MCF 10A (cell line): ENCODE measurements at regions of chr4 and their contacts with region 1.

Region 1: GRCh38 chr4:71009890-71010588 is 16.6 kb downstream of the DCK start:
- DNase-seq: peak; percentile 46
- H3K4me3 Mint-ChIP-seq: no peak overlapping the region
- H3K27ac Mint-ChIP-seq: no peak overlapping the region
- H3K4me1 Mint-ChIP-seq: peaks cover 12% of the 10 kb centered on the region
- H3K27me3 Mint-ChIP-seq: no peaks in the 10 kb centered on the region
- CTCF ChIP-seq: peak; percentile 35

Region 2: GRCh38 chr4:70601422-70602039 is 408.5 kb before region 1 on chr4:
- CTCF ChIA-PET with region 1: interaction called, 4 read pairs
- POLR2A ChIA-PET with region 1: no interaction called
- intact Hi-C with region 1: loop called (anchors 1 kb)
- DNase-seq: peak; percentile 76
- H3K4me3 Mint-ChIP-seq: no peak overlapping the region
- H3K27ac Mint-ChIP-seq: no peak overlapping the region
- H3K4me1 Mint-ChIP-seq: no peaks in the 10 kb centered on the region
- H3K27me3 Mint-ChIP-seq: no peaks in the 10 kb centered on the region
- CTCF ChIP-seq: peak; percentile 72

Region 3: GRCh38 chr4:70901984-70902576 is 108.0 kb before region 1 on chr4 and contains the start of gene MOB1B:
- CTCF ChIA-PET with region 1: interaction called, 11 read pairs
- POLR2A ChIA-PET with region 1: no interaction called
- intact Hi-C with region 1: no loop called
- DNase-seq: peak; percentile 82
- H3K4me3 Mint-ChIP-seq: peak within 1 kb of the TSS; percentile 85
- H3K27ac Mint-ChIP-seq: peak within 1 kb of the TSS; percentile 68
- H3K4me1 Mint-ChIP-seq: peaks cover 9% of the 10 kb centered on the region
- H3K27me3 Mint-ChIP-seq: no peaks in the 10 kb centered on the region
- CTCF ChIP-seq: peak; percentile 35
- total RNA-seq, gene MOB1B: 16.1 and 19.9 TPM in 2 replicates